Activated CD4-positive, alpha-beta T cell treated with anti-CD3 and anti-CD28 coated beads for 36 hours (primary cell): ENCODE measurements at regions of chr11 and their contacts with region 1.

Region 1: DNA sequence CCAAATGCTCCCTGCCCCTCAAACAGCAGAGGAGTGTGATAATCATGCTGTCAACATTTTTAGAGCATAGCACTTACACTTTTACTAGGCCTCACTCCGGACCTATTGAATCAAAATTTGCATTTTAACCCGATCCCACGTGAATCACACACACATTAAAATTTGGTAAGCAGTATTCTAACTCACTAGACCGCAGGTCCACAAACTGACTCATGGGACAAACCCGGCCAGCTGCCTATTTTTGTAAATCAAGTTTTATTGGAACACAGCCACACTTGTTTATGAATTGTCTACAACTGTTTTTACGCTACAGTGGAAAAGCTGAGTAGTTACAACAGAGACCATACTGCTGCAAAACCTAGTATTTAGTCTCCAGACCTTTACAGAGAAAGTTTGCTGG is 43.3 kb downstream of the SNX19 start:
- DNase-seq: no peak
- ATAC-seq: no peak
- H3K4me3 Mint-ChIP-seq: no peak overlapping the region
- H3K27ac Mint-ChIP-seq: peak overlapping the region; percentile 61
- H3K4me1 Mint-ChIP-seq: peaks cover 7% of the 10 kb centered on the region
- H3K27me3 Mint-ChIP-seq: no peaks in the 10 kb centered on the region

Region 2: GRCh38 chr11:130308886-130309285 is 564.1 kb before region 1 on chr11:
- CTCF ChIA-PET with region 1: no interaction called
- POLR2A ChIA-PET with region 1: no interaction called
- intact Hi-C with region 1: no loop called
- DNase-seq: no peak
- ATAC-seq: no peak
- H3K4me3 Mint-ChIP-seq: no peak overlapping the region
- H3K27ac Mint-ChIP-seq: no peak overlapping the region
- H3K4me1 Mint-ChIP-seq: peaks cover 49% of the 10 kb centered on the region
- H3K27me3 Mint-ChIP-seq: no peaks in the 10 kb centered on the region

Region 3: DNA sequence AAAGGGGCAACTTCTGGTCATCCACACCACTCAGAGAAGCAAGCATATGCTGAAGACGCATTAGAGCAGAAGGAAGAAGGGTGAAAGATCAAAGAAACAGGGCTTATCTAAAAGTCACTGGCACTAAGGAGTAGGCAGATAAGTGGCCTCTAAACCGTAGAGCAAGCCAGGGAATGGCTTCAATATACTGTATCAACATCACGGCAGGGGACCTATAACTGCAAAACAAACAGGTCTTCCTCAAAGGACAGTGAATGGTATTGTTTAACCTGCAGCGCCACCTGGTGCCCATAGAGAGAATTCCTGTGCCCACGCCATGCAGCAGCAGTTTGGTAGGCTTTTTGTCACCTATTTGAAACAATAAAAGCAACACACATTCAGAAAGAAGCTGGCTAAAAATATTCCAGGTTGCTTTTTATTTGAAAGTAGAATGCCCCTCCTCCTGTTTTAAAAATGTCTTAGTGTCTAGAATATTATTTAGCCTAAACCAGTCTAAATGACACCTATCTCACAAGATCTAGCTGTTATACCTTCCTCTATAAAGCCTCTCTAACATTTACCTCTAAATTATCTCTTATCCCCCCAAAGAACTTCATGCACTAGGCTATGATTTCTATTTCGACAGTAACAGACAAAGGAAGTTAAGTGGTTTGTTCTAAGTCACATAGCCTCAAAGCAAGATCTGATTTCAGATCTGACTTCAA is 21.5 kb after region 1 on chr11:
- CTCF ChIA-PET with region 1: interaction called, 27 read pairs
- POLR2A ChIA-PET with region 1: no interaction called
- intact Hi-C with region 1: no loop called
- DNase-seq: peak; percentile 76
- ATAC-seq: peak; percentile 92
- H3K4me3 Mint-ChIP-seq: no peak overlapping the region
- H3K27ac Mint-ChIP-seq: peak overlapping the region; percentile 6
- H3K4me1 Mint-ChIP-seq: peaks cover 12% of the 10 kb centered on the region
- H3K27me3 Mint-ChIP-seq: no peaks in the 10 kb centered on the region